ENCODE measurements at regions of chr17 and their contacts with region 1.

Region 1: GRCh38 chr17:48492401-48493298 is 38.2 kb downstream of the HOXB1 start:
- DNase-seq: peak; percentile 76
- H3K4me3 Mint-ChIP-seq: peak overlapping the region; percentile 39
- H3K27ac Mint-ChIP-seq: no peak overlapping the region
- H3K4me1 Mint-ChIP-seq: peaks cover 17% of the 10 kb centered on the region
- H3K27me3 Mint-ChIP-seq: peaks cover 11% of the 10 kb centered on the region

Region 2: DNA sequence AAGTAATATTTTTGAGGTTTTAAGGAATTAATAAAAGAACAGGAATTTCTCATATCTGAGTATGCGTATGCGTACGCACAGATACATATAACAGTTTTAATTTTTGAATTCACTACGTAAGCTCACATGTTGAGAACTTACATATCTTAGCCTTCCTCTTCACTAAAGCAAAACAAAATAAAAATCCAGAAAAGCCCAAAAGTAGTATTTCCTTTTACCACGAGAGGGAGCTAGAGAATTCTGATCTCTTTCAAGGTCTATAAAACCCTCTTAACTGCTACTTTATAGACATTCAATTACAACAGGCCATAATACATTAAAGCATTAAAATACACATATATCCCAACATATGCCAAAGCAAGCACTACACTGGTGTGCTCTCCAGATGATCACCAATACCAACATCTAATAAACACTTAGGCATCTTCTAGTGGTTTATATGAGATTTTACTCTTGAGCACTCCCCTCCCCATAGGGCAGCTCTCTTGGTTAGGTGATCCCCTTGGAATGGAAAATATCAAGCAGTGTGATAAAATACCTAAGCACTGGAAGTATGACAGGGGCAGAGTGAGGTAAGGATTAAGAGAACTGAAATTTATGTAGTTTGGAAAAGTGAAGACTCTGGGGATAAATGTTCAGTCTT is 156.7 kb before region 1 on chr17:
- CTCF ChIA-PET with region 1: interaction called, 19 read pairs
- POLR2A ChIA-PET with region 1: no interaction called
- intact Hi-C with region 1: loop called (anchors 10 kb)
- DNase-seq: no peak
- H3K4me3 Mint-ChIP-seq: no peak overlapping the region
- H3K27ac Mint-ChIP-seq: no peak overlapping the region
- H3K4me1 Mint-ChIP-seq: peaks cover 8% of the 10 kb centered on the region
- H3K27me3 Mint-ChIP-seq: no peaks in the 10 kb centered on the region

Region 3: GRCh38 chr17:48478224-48479013 is 14.2 kb before region 1 on chr17:
- CTCF ChIA-PET with region 1: interaction called, 15 read pairs
- POLR2A ChIA-PET with region 1: no interaction called
- intact Hi-C with region 1: no loop called
- DNase-seq: peak; percentile 50
- H3K4me3 Mint-ChIP-seq: no peak overlapping the region
- H3K27ac Mint-ChIP-seq: no peak overlapping the region
- H3K4me1 Mint-ChIP-seq: peaks cover 15% of the 10 kb centered on the region
- H3K27me3 Mint-ChIP-seq: no peaks in the 10 kb centered on the region

Region 4: GRCh38 chr17:48510761-48511604 is 18.3 kb after region 1 on chr17:
- CTCF ChIA-PET with region 1: interaction called, 6 read pairs
- POLR2A ChIA-PET with region 1: no interaction called
- intact Hi-C with region 1: loop called (anchors 2 kb)
- DNase-seq: peak; percentile 62
- H3K4me3 Mint-ChIP-seq: peak overlapping the region; percentile 29
- H3K27ac Mint-ChIP-seq: peak overlapping the region; percentile 77
- H3K4me1 Mint-ChIP-seq: peaks cover 41% of the 10 kb centered on the region
- H3K27me3 Mint-ChIP-seq: peaks cover 5% of the 10 kb centered on the region

Region 5: GRCh38 chr17:48586355-48587258 is 94.0 kb after region 1 on chr17:
- CTCF ChIA-PET with region 1: interaction called, 37 read pairs
- POLR2A ChIA-PET with region 1: no interaction called
- intact Hi-C with region 1: no loop called
- DNase-seq: peak; percentile 55
- H3K4me3 Mint-ChIP-seq: peak overlapping the region; percentile 88
- H3K27ac Mint-ChIP-seq: no peak overlapping the region
- H3K4me1 Mint-ChIP-seq: peaks cover 21% of the 10 kb centered on the region
- H3K27me3 Mint-ChIP-seq: peaks cover 74% of the 10 kb centered on the region

Region 6: GRCh38 chr17:48825446-48826381 is 333.1 kb after region 1 on chr17:
- CTCF ChIA-PET with region 1: no interaction called
- POLR2A ChIA-PET with region 1: no interaction called
- intact Hi-C with region 1: no loop called
- DNase-seq: no peak
- H3K4me3 Mint-ChIP-seq: no peak overlapping the region
- H3K27ac Mint-ChIP-seq: no peak overlapping the region
- H3K4me1 Mint-ChIP-seq: peaks cover 5% of the 10 kb centered on the region
- H3K27me3 Mint-ChIP-seq: peaks cover 6% of the 10 kb centered on the region